ENCODE measurements at regions of chr1 and their contacts with region 1.

Region 1: DNA sequence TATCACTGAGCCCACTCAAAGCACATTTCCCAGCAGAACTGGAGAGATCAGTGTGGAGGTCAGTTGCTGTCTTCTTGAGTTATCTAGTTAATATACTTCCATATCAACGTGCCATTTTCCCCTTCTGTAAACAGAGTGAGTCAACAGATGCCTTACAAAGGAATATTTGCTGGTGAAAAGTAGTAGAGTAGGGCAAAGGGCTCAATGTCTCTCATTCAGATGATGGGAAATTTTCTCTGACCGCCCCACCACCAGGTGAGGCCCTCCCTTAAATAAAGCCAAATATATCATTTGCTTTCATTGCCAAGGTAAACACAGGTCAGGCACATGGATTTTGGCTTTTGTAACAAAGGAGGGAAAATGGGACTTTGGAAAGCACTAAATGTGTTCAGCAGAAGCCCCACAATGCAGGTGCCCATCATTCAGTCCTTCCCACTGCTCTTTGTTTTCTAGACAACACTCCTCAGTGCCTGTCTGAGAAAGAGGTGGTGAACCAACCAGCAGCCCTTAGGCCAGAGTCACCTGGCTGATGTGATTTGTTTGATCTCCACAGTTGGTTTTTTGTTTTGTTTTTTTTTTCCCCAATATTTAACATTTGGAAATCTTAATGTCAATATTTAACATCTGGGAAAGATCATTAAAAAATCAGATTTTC is 40.5 kb upstream of the SAMD13 start:
- DNase-seq: peak in 1 of 3 donors; percentile 47
- ATAC-seq: peak; percentile 91
- H3K4me3 ChIP-seq: no peak overlapping the region
- H3K4me1 ChIP-seq: peaks cover 21% of the 10 kb centered on the region
- CTCF ChIP-seq: no peak

Region 2: GRCh38 chr1:83954166-83954823 is 306.7 kb before region 1 on chr1:
- intact Hi-C with region 1: no loop called
- DNase-seq: no peak
- ATAC-seq: no peak
- H3K4me3 ChIP-seq: no peak overlapping the region
- H3K4me1 ChIP-seq: no peaks in the 10 kb centered on the region
- CTCF ChIP-seq: no peak

Region 3: GRCh38 chr1:84301004-84301784 is 40.2 kb after region 1 on chr1 and contains the start of gene SAMD13:
- intact Hi-C with region 1: loop called in 1 of 2 experiments (anchors 5 kb)
- DNase-seq: peak in 2 of 3 donors; percentile 36 to 99
- ATAC-seq: peak; percentile 52
- H3K4me3 ChIP-seq: no peak within 1 kb of the TSS
- H3K4me1 ChIP-seq: peaks cover 22% of the 10 kb centered on the region
- CTCF ChIP-seq: no peak
- total RNA-seq, gene SAMD13: 6.8 to 35.9 (median 21.0) TPM